PC-9 (cell line): ENCODE measurements at regions of chr3 and their contacts with region 1.

Region 1: GRCh38 chr3:48635222-48636021 is at the start of gene SLC26A6:
- DNase-seq: peak; percentile 83 to 97
- H3K4me3 ChIP-seq: peak within 1 kb of the TSS; percentile 89
- H3K27ac ChIP-seq: no peak within 1 kb of the TSS
- H3K4me1 ChIP-seq: no peaks in the 10 kb centered on the region
- H3K27me3 ChIP-seq: no peaks in the 10 kb centered on the region
- CTCF ChIP-seq: peak; percentile 56; the same call in 1 of the 2 replicates
- total RNA-seq, gene SLC26A6: 16.5 and 18.7 TPM in 2 replicates

Region 2: GRCh38 chr3:48446425-48447193 is 188.8 kb before region 1 on chr3 and contains the start of gene ATRIP:
- CTCF ChIA-PET with region 1: no interaction called
- POLR2A ChIA-PET with region 1: interaction called, 25 read pairs
- intact Hi-C with region 1: no loop called
- DNase-seq: peak; percentile 75 to 91
- H3K4me3 ChIP-seq: peak within 1 kb of the TSS; percentile 92
- H3K27ac ChIP-seq: peak within 1 kb of the TSS; percentile 10; the same call in 1 of the 2 replicates
- H3K4me1 ChIP-seq: peaks cover 17% of the 10 kb centered on the region
- H3K27me3 ChIP-seq: no peaks in the 10 kb centered on the region
- CTCF ChIP-seq: no peak
- total RNA-seq, gene ATRIP: 6.9 and 8.5 TPM in 2 replicates

Region 3: GRCh38 chr3:48465531-48466378 is 169.7 kb before region 1 on chr3:
- CTCF ChIA-PET with region 1: no interaction called
- POLR2A ChIA-PET with region 1: no interaction called
- intact Hi-C with region 1: no loop called
- DNase-seq: peak; percentile 98 to 100
- H3K4me3 ChIP-seq: peak overlapping the region; percentile 63
- H3K27ac ChIP-seq: peak overlapping the region; percentile 99
- H3K4me1 ChIP-seq: peaks cover 21% of the 10 kb centered on the region
- H3K27me3 ChIP-seq: no peaks in the 10 kb centered on the region
- CTCF ChIP-seq: peak; percentile 70

Region 4: DNA sequence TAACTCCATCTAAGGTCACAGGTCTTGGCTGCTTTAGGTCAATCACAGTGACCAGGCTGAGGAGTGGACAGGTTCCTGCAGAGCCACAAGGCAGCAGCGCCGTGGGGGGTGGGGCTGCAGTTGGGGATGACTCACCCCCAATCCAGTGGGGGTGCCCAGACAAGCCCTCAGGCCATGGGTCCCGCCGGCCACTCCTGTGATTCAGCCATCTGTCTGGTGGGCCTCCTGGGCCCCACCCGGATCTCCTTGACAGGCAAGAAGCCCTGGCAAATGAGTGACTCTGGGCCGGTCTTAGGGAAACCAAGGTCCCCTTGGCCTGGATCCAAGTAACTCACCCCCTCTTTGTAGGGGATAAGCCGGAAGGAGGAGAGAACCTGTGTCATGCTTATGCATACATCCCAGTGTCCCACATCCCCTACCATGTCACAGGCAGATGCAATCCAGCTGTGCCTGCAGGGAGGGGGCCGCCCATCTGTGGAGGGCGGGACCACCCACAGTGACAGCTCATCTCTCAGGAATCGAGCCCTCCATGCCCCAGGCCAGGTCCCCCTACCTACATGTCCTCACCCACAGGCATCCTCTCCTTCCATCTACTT is 39.8 kb before region 1 on chr3:
- CTCF ChIA-PET with region 1: no interaction called
- POLR2A ChIA-PET with region 1: no interaction called
- intact Hi-C with region 1: loop called (anchors 1 kb)
- DNase-seq: peak; percentile 86 to 98
- H3K4me3 ChIP-seq: peak overlapping the region; percentile 62; the same call in 1 of the 2 replicates
- H3K27ac ChIP-seq: peak overlapping the region; percentile 14
- H3K4me1 ChIP-seq: peaks cover 53% of the 10 kb centered on the region
- H3K27me3 ChIP-seq: no peaks in the 10 kb centered on the region
- CTCF ChIP-seq: no peak

Region 5: DNA sequence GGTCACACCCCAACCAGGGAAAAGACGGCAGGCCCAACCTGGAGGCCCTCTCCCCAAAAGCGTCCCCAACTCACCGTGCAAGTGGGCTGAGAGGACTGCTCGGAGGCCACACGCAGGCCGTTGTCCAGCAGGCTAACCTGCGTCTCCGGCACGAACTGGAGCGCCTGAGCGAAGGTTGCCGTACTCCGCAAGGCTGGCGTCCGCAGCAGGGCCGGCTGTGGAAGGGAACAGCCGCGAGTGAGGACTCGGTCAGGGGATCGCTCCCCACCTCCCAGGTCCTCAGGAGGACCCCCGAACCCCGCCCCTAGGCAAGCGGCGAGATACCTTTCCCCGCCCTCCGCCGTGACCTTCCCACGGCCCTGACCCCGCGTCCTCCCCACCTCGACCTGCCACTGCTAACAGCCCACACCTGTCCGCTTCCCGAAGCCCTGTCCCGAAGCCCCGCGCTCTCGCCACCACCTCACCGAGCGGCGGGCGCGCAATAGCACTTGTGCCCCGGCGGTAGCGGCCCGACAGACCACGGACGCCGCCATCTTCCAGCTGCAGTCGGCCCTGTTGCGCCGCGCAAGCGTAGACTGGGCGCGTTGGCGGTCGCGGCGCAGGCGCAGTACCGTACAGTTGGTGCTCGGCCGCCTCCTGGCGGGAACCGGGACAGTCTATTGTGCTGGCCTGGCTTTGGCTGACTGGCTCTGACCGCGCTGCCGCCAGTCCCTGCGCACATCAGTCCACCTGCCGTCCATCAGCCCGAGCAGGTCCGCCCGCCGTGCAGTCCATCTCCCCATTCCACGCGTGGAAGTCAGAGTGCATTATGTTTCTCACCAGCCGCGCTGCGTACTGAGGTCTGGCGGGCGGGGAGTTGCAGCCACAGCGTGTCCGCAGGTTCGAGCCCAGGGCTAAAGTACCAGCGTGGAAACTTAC is 26.1 kb before region 1 on chr3 and contains the start of gene UQCRC1:
- CTCF ChIA-PET with region 1: no interaction called
- POLR2A ChIA-PET with region 1: no interaction called
- intact Hi-C with region 1: loop called (anchors 2 kb)
- DNase-seq: peak; percentile 79 to 93
- H3K4me3 ChIP-seq: peak within 1 kb of the TSS; percentile 65
- H3K27ac ChIP-seq: peak within 1 kb of the TSS; percentile 54
- H3K4me1 ChIP-seq: peaks cover 22% of the 10 kb centered on the region
- H3K27me3 ChIP-seq: no peaks in the 10 kb centered on the region
- CTCF ChIP-seq: peak; percentile 60; the same call in 1 of the 2 replicates
- total RNA-seq, gene UQCRC1: 255 and 264 TPM in 2 replicates

Region 6: GRCh38 chr3:48652923-48653715 is 17.7 kb after region 1 on chr3:
- CTCF ChIA-PET with region 1: no interaction called
- POLR2A ChIA-PET with region 1: no interaction called
- intact Hi-C with region 1: loop called (anchors 1 kb)
- DNase-seq: peak; percentile 58
- H3K4me3 ChIP-seq: no peak overlapping the region
- H3K27ac ChIP-seq: no peak overlapping the region
- H3K4me1 ChIP-seq: no peaks in the 10 kb centered on the region
- H3K27me3 ChIP-seq: no peaks in the 10 kb centered on the region
- CTCF ChIP-seq: no peak